ENCODE measurements at regions of chr2 and their contacts with region 1.

Region 1: GRCh38 chr2:85288244-85288725 is 39.5 kb downstream of the TGOLN2 start:
- DNase-seq: no peak
- ATAC-seq: no peak
- H3K4me3 ChIP-seq: no peak overlapping the region
- H3K4me3 Mint-ChIP-seq: no peak overlapping the region
- H3K27ac ChIP-seq: no peak overlapping the region
- H3K27ac Mint-ChIP-seq: no peak overlapping the region
- H3K4me1 ChIP-seq: no peaks in the 10 kb centered on the region
- H3K4me1 Mint-ChIP-seq: peaks cover 9% of the 10 kb centered on the region
- H3K27me3 ChIP-seq: no peaks in the 10 kb centered on the region
- H3K27me3 Mint-ChIP-seq: peaks cover 8% of the 10 kb centered on the region
- CTCF ChIP-seq: no peak

Region 2: GRCh38 chr2:84495539-84496146 is 792.6 kb before region 1 on chr2:
- CTCF ChIA-PET with region 1: interaction called, 3 read pairs
- POLR2A ChIA-PET with region 1: no interaction called
- intact Hi-C with region 1: loop called (anchors 1 kb)
- DNase-seq: peak; percentile 81
- ATAC-seq: peak; percentile 89
- H3K4me3 ChIP-seq: no peak overlapping the region
- H3K4me3 Mint-ChIP-seq: no peak overlapping the region
- H3K27ac ChIP-seq: no peak overlapping the region
- H3K27ac Mint-ChIP-seq: no peak overlapping the region
- H3K4me1 ChIP-seq: no peaks in the 10 kb centered on the region
- H3K4me1 Mint-ChIP-seq: no peaks in the 10 kb centered on the region
- H3K27me3 ChIP-seq: no peaks in the 10 kb centered on the region
- H3K27me3 Mint-ChIP-seq: no peaks in the 10 kb centered on the region
- CTCF ChIP-seq: peak; percentile 83

Region 3: GRCh38 chr2:84870306-84870705 is 418.0 kb before region 1 on chr2:
- CTCF ChIA-PET with region 1: no interaction called
- POLR2A ChIA-PET with region 1: no interaction called
- intact Hi-C with region 1: loop called (anchors 5 kb)
- DNase-seq: peak; percentile 56
- ATAC-seq: peak; percentile 75
- H3K4me3 ChIP-seq: no peak overlapping the region
- H3K4me3 Mint-ChIP-seq: no peak overlapping the region
- H3K27ac ChIP-seq: no peak overlapping the region
- H3K27ac Mint-ChIP-seq: no peak overlapping the region
- H3K4me1 ChIP-seq: peaks cover 0 to 6% of the 10 kb centered on the region in 2 donors
- H3K4me1 Mint-ChIP-seq: peaks cover 5% of the 10 kb centered on the region
- H3K27me3 ChIP-seq: no peaks in the 10 kb centered on the region
- H3K27me3 Mint-ChIP-seq: peaks cover 3% of the 10 kb centered on the region
- CTCF ChIP-seq: no peak

Region 4: GRCh38 chr2:84894758-84895520 is 393.3 kb before region 1 on chr2:
- CTCF ChIA-PET with region 1: no interaction called
- POLR2A ChIA-PET with region 1: no interaction called
- intact Hi-C with region 1: no loop called
- DNase-seq: peak; percentile 67
- ATAC-seq: peak; percentile 61
- H3K4me3 ChIP-seq: peak overlapping the region in 4 of 5 experiments; percentile 3 to 46 (median 32)
- H3K4me3 Mint-ChIP-seq: peak overlapping the region; percentile 20
- H3K27ac ChIP-seq: peak overlapping the region; percentile 78 to 91
- H3K27ac Mint-ChIP-seq: peak overlapping the region; percentile 85
- H3K4me1 ChIP-seq: peaks cover 38 to 42% of the 10 kb centered on the region in 2 donors
- H3K4me1 Mint-ChIP-seq: peaks cover 49% of the 10 kb centered on the region
- H3K27me3 ChIP-seq: no peaks in the 10 kb centered on the region
- H3K27me3 Mint-ChIP-seq: no peaks in the 10 kb centered on the region
- CTCF ChIP-seq: no peak

Region 5: GRCh38 chr2:85066874-85067351 is 221.4 kb before region 1 on chr2:
- CTCF ChIA-PET with region 1: interaction called, 6 read pairs
- POLR2A ChIA-PET with region 1: no interaction called
- intact Hi-C with region 1: loop called (anchors 1 kb)
- DNase-seq: peak; percentile 49
- ATAC-seq: peak; percentile 49
- H3K4me3 ChIP-seq: no peak overlapping the region
- H3K4me3 Mint-ChIP-seq: no peak overlapping the region
- H3K27ac ChIP-seq: no peak overlapping the region
- H3K27ac Mint-ChIP-seq: no peak overlapping the region
- H3K4me1 ChIP-seq: peaks cover 7 to 9% of the 10 kb centered on the region in 2 donors
- H3K4me1 Mint-ChIP-seq: peaks cover 8% of the 10 kb centered on the region
- H3K27me3 ChIP-seq: peaks cover 0 to 22% (median 3%) of the 10 kb centered on the region in 4 experiments
- H3K27me3 Mint-ChIP-seq: peaks cover 31% of the 10 kb centered on the region
- CTCF ChIP-seq: peak; percentile 53

Region 6: GRCh38 chr2:85132834-85133637 is 155.2 kb before region 1 on chr2 and contains the start of gene TCF7L1:
- CTCF ChIA-PET with region 1: no interaction called
- POLR2A ChIA-PET with region 1: interaction called, 3 read pairs
- intact Hi-C with region 1: loop called (anchors 10 kb)
- DNase-seq: peak; percentile 53
- ATAC-seq: peak; percentile 65
- H3K4me3 ChIP-seq: peak within 1 kb of the TSS in 4 of 5 experiments; percentile 21 to 60 (median 47)
- H3K4me3 Mint-ChIP-seq: peak within 1 kb of the TSS; percentile 80
- H3K27ac ChIP-seq: no peak within 1 kb of the TSS
- H3K27ac Mint-ChIP-seq: peak within 1 kb of the TSS; percentile 26
- H3K4me1 ChIP-seq: peaks cover 19 to 21% of the 10 kb centered on the region in 2 donors
- H3K4me1 Mint-ChIP-seq: peaks cover 16% of the 10 kb centered on the region
- H3K27me3 ChIP-seq: peaks cover 0 to 53% (median 22%) of the 10 kb centered on the region in 4 experiments
- H3K27me3 Mint-ChIP-seq: peaks cover 48% of the 10 kb centered on the region
- CTCF ChIP-seq: no peak
- total RNA-seq, gene TCF7L1: 0.53 and 0.67 TPM in 2 replicates

Region 7: DNA sequence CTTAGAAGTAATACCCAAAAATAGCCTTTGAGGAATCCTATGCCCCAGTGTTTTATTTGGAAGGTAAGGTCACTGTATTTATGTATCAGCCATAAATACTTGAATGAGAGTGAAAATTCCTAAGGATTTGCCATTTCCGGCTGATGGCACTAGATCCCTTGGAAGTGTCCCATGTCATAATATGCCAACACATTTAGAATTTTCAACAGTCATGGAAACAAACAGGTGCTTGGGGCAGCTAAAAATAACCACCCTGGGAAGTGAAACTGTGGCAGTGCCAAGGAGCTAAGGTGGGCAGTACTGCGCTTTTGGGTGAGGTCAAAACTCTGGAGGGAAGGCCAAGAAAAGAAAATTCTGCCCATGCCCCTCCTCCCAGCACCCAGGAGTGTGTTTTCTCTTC is 74.9 kb before region 1 on chr2:
- CTCF ChIA-PET with region 1: no interaction called
- POLR2A ChIA-PET with region 1: no interaction called
- intact Hi-C with region 1: no loop called
- DNase-seq: no peak
- ATAC-seq: no peak
- H3K4me3 ChIP-seq: no peak overlapping the region
- H3K4me3 Mint-ChIP-seq: no peak overlapping the region
- H3K27ac ChIP-seq: no peak overlapping the region
- H3K27ac Mint-ChIP-seq: no peak overlapping the region
- H3K4me1 ChIP-seq: no peaks in the 10 kb centered on the region
- H3K4me1 Mint-ChIP-seq: no peaks in the 10 kb centered on the region
- H3K27me3 ChIP-seq: peaks cover 0 to 11% (median 4%) of the 10 kb centered on the region in 4 experiments
- H3K27me3 Mint-ChIP-seq: peaks cover 39% of the 10 kb centered on the region
- CTCF ChIP-seq: no peak

Region 8: DNA sequence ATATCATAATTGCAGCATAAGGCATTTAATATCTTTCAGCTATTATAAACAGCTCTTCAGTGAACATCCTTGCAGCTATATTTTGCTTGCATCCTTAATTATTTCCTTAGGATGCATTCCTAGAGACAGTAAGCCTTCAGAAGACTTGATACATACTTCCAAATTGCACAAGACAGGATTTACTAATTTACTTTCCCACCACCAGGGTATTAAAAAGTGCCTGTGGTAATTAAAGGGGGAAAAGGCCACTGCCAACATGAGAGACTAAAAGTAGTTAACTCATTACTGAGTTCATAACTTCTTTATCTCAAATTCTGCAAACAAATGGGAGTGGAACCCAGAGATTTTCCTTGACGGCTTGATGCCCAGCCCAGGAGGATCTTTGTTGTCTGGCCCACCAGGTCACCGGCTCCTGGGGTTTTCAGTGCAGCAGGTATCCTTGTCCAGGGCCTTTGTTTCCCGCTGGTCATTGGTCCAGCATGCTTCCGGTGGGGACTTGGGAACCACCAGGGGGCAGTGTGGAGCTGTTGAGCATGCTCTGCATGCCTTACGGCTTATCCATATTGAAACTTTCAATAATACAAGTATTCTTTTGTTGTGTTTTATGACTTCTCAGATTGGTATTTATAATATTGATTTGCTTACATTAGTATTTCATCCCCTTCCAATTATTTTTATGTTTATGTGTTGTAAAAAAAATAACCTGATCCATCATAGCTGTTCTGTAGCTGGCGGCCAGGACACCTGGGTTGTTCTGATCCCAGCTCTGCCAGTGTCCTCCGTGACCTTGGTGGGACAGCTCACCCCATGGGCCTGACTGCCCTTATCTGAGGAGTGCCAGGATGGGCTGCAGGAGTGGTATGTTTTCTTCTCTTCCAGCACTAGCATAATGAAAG is 21.9 kb before region 1 on chr2:
- CTCF ChIA-PET with region 1: interaction called, 27 read pairs
- POLR2A ChIA-PET with region 1: no interaction called
- intact Hi-C with region 1: loop called (anchors 1 kb)
- DNase-seq: peak; percentile 56
- ATAC-seq: no peak
- H3K4me3 ChIP-seq: no peak overlapping the region
- H3K4me3 Mint-ChIP-seq: no peak overlapping the region
- H3K27ac ChIP-seq: no peak overlapping the region
- H3K27ac Mint-ChIP-seq: no peak overlapping the region
- H3K4me1 ChIP-seq: no peaks in the 10 kb centered on the region
- H3K4me1 Mint-ChIP-seq: no peaks in the 10 kb centered on the region
- H3K27me3 ChIP-seq: peaks cover 0 to 6% (median 1%) of the 10 kb centered on the region in 4 experiments
- H3K27me3 Mint-ChIP-seq: peaks cover 36% of the 10 kb centered on the region
- CTCF ChIP-seq: peak; percentile 95

Region 9: GRCh38 chr2:85302121-85302520 is 13.8 kb after region 1 on chr2:
- CTCF ChIA-PET with region 1: interaction called, 15 read pairs
- POLR2A ChIA-PET with region 1: no interaction called
- intact Hi-C with region 1: loop called (anchors 1 kb)
- DNase-seq: no peak
- ATAC-seq: no peak
- H3K4me3 ChIP-seq: no peak overlapping the region
- H3K4me3 Mint-ChIP-seq: no peak overlapping the region
- H3K27ac ChIP-seq: no peak overlapping the region
- H3K27ac Mint-ChIP-seq: no peak overlapping the region
- H3K4me1 ChIP-seq: peaks cover 0 to 3% of the 10 kb centered on the region in 2 donors
- H3K4me1 Mint-ChIP-seq: peaks cover 8% of the 10 kb centered on the region
- H3K27me3 ChIP-seq: peaks cover 0 to 14% (median 3%) of the 10 kb centered on the region in 4 experiments
- H3K27me3 Mint-ChIP-seq: peaks cover 29% of the 10 kb centered on the region
- CTCF ChIP-seq: no peak

Measured in B cell (primary cell).